AG04450 (cell line): ENCODE measurements at regions of chr22 and their contacts with region 1.

Region 1: GRCh38 chr22:47196881-47197772 is 434.7 kb downstream of the TBC1D22A start:
- DNase-seq: no peak
- H3K4me3 ChIP-seq: no peak overlapping the region
- H3K27ac ChIP-seq: no peak overlapping the region
- H3K27me3 ChIP-seq: peaks cover 23% of the 10 kb centered on the region
- CTCF ChIP-seq: no peak

Region 2: DNA sequence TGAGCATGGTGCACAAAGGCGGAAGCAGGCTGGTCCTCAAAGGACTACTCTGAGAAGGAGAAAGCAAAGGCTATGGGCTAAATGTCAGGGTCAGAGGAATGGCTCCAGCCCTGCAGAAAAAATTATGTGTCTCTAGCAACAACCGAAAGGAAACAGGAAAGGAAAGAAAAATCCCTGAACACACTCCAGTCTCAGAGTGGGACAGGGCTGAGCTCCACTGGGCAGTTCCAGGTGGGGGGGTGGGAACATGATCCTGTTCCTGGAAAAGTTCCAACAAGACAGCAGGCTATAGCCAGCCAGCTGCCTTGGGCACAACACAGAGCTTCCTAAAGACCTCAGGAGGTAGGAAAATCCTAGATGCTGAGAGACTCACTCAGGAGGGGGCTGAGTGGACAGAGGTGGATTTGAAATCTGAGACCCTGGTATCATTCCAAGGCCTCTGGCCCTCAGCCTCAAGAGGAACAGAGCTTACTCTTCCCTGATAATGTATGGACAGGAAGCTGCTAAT is 653.6 kb after region 1 on chr22:
- CTCF ChIA-PET with region 1: no interaction called
- POLR2A ChIA-PET with region 1: interaction called, 12 read pairs
- DNase-seq: no peak
- H3K4me3 ChIP-seq: no peak overlapping the region
- H3K27ac ChIP-seq: no peak overlapping the region
- H3K27me3 ChIP-seq: no peaks in the 10 kb centered on the region
- CTCF ChIP-seq: no peak

Region 3: GRCh38 chr22:48477031-48477721 is 1280.0 kb after region 1 on chr22:
- CTCF ChIA-PET with region 1: no interaction called
- POLR2A ChIA-PET with region 1: no interaction called
- DNase-seq: no peak
- H3K4me3 ChIP-seq: no peak overlapping the region
- H3K27ac ChIP-seq: no peak overlapping the region
- H3K27me3 ChIP-seq: no peaks in the 10 kb centered on the region
- CTCF ChIP-seq: no peak